Activated CD4-positive, alpha-beta memory T cell treated with anti-CD3 and anti-CD28 coated beads for 36 hours (primary cell): ENCODE measurements at regions of chr20 and their contacts with region 1.

Region 1: GRCh38 chr20:44960103-44960852 is at the start of gene TOMM34:
- DNase-seq: peak; percentile 96
- H3K4me3 Mint-ChIP-seq: peak within 1 kb of the TSS; percentile 95
- H3K27ac Mint-ChIP-seq: peak within 1 kb of the TSS; percentile 99
- H3K4me1 Mint-ChIP-seq: peaks cover 58% of the 10 kb centered on the region
- H3K27me3 Mint-ChIP-seq: no peaks in the 10 kb centered on the region
- total RNA-seq, gene TOMM34: 56.3 to 58.4 TPM

Region 2: GRCh38 chr20:44642203-44643153 is 317.8 kb before region 1 on chr20:
- CTCF ChIA-PET with region 1: no interaction called
- POLR2A ChIA-PET with region 1: no interaction called
- intact Hi-C with region 1: loop called (anchors 1 kb)
- DNase-seq: peak; percentile 54
- H3K4me3 Mint-ChIP-seq: peak overlapping the region; percentile 39
- H3K27ac Mint-ChIP-seq: peak overlapping the region; percentile 76
- H3K4me1 Mint-ChIP-seq: peaks cover 55% of the 10 kb centered on the region
- H3K27me3 Mint-ChIP-seq: no peaks in the 10 kb centered on the region

Region 3: GRCh38 chr20:44692932-44693476 is 267.3 kb before region 1 on chr20:
- CTCF ChIA-PET with region 1: no interaction called
- POLR2A ChIA-PET with region 1: no interaction called
- intact Hi-C with region 1: no loop called
- DNase-seq: no peak
- H3K4me3 Mint-ChIP-seq: no peak overlapping the region
- H3K27ac Mint-ChIP-seq: no peak overlapping the region
- H3K4me1 Mint-ChIP-seq: peaks cover 2% of the 10 kb centered on the region
- H3K27me3 Mint-ChIP-seq: no peaks in the 10 kb centered on the region

Region 4: DNA sequence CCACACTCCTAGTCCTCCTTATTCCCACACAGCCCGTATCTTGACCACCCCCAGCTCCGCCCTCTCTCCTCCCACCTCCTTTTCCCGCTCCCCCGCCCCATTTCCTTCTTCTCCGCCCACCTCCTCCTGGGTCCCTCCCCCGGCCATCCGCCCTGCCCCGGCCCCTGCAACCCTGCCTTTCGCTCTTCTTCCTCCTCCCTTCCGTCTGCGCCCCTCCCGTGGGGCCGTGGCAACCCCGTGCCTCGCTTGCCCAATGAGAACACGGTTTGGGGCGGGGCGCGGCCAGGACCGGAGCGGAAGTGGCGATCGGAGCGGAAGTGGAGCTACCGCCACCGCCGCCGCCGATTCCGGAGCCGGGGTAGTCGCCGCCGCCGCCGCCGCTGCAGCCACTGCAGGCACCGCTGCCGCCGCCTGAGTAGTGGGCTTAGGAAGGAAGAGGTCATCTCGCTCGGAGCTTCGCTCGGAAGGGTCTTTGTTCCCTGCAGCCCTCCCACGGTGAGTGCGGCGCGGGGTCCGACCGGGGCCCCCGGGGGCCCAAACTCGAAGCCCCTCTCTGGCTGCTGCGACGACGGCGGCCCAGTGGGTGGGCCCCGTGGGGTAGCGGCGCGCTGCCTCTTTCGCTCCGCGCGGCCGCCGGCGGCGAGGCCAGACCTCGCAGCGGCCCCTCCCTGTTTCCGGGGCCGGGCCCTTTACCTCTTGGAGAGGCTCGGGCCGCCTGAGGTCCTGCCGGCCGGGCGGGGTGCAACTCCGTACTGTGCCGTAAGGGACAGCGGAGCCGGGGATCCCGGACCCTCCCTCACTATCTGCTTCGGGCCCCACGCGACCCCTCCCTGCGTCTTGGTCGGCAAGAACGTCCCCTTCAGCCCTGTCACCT is 74.6 kb before region 1 on chr20 and contains the start of gene YWHAB:
- CTCF ChIA-PET with region 1: no interaction called
- POLR2A ChIA-PET with region 1: interaction called, 5 read pairs
- intact Hi-C with region 1: loop called (anchors 2 kb)
- DNase-seq: peak; percentile 99
- H3K4me3 Mint-ChIP-seq: peak within 1 kb of the TSS; percentile 85
- H3K27ac Mint-ChIP-seq: peak within 1 kb of the TSS; percentile 82
- H3K4me1 Mint-ChIP-seq: peaks cover 48% of the 10 kb centered on the region
- H3K27me3 Mint-ChIP-seq: no peaks in the 10 kb centered on the region
- total RNA-seq, gene YWHAB: 280 to 284 TPM

Region 5: GRCh38 chr20:44979090-44979621 is 18.9 kb after region 1 on chr20:
- CTCF ChIA-PET with region 1: interaction called, 5 read pairs
- POLR2A ChIA-PET with region 1: interaction called, 12 read pairs
- intact Hi-C with region 1: no loop called
- DNase-seq: peak; percentile 77
- H3K4me3 Mint-ChIP-seq: peak overlapping the region; percentile 50
- H3K27ac Mint-ChIP-seq: peak overlapping the region; percentile 88
- H3K4me1 Mint-ChIP-seq: peaks cover 79% of the 10 kb centered on the region
- H3K27me3 Mint-ChIP-seq: no peaks in the 10 kb centered on the region

Region 6: DNA sequence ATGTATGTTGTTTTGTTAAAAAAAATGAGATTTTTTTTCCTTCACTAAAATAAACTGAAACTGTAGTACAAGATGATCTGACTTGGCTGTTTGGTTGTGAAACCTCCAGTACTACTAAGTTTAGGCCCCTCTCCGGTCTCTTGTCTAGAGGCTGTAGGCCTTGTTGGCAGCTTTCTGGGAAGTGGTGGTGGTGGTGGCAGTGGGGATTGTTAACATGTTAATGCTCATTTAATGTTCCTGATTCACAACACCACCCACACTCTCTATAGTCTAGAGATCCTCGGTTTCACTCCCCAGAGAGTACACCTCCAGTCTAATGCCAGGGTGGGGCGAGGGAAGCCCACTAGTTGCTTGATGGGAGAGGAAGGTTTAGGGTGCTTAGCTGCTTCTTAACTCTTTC is 30.1 kb after region 1 on chr20:
- CTCF ChIA-PET with region 1: no interaction called
- POLR2A ChIA-PET with region 1: interaction called, 8 read pairs
- intact Hi-C with region 1: loop called (anchors 1 kb)
- DNase-seq: peak; percentile 85
- H3K4me3 Mint-ChIP-seq: peak overlapping the region; percentile 74
- H3K27ac Mint-ChIP-seq: peak overlapping the region; percentile 96
- H3K4me1 Mint-ChIP-seq: peaks cover 72% of the 10 kb centered on the region
- H3K27me3 Mint-ChIP-seq: no peaks in the 10 kb centered on the region